ENCODE measurements at regions of chr18 and their contacts with region 1.

Region 1: GRCh38 chr18:5868218-5869115 is 26.9 kb downstream of the TMEM200C start:
- DNase-seq: peak; percentile 84
- H3K4me3 ChIP-seq: no peak overlapping the region
- H3K27ac ChIP-seq: no peak overlapping the region
- H3K4me1 ChIP-seq: no peaks in the 10 kb centered on the region
- H3K27me3 ChIP-seq: no peaks in the 10 kb centered on the region
- CTCF ChIP-seq: peak; percentile 73 to 77
- POLR2A ChIP-seq: no peak

Region 2: DNA sequence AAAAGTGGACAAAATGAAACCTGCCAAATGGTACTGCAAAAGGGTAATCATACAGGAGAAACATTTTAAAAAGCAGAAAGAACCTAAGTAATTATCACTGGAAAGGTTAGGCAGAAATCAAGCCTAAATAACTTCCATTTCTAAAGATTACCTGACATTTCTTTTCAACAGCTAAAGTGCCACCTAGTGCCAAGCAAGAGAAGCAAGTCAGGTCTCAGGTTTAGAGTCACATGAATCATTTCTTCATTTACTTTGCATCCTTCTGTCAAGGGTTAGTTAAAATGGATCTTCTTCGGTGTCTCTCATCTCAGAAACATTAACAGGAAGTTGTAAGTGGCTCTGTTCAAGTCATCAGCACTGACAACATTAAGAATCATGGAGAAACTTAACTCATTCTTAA is 761.7 kb before region 1 on chr18:
- CTCF ChIA-PET with region 1: no interaction called
- POLR2A ChIA-PET with region 1: no interaction called
- dilution Hi-C with region 1: no loop called
- intact Hi-C with region 1: no loop called
- DNase-seq: no peak
- H3K4me3 ChIP-seq: no peak overlapping the region
- H3K27ac ChIP-seq: no peak overlapping the region
- H3K4me1 ChIP-seq: no peaks in the 10 kb centered on the region
- H3K27me3 ChIP-seq: no peaks in the 10 kb centered on the region
- CTCF ChIP-seq: no peak
- POLR2A ChIP-seq: no peak

Region 3: GRCh38 chr18:5600378-5601071 is 267.9 kb before region 1 on chr18:
- CTCF ChIA-PET with region 1: interaction called, 11 read pairs
- POLR2A ChIA-PET with region 1: no interaction called
- dilution Hi-C with region 1: no loop called
- intact Hi-C with region 1: no loop called
- DNase-seq: peak; percentile 57
- H3K4me3 ChIP-seq: no peak overlapping the region
- H3K27ac ChIP-seq: no peak overlapping the region
- H3K4me1 ChIP-seq: no peaks in the 10 kb centered on the region
- H3K27me3 ChIP-seq: peaks cover 0 to 11% of the 10 kb centered on the region in 2 experiments
- CTCF ChIP-seq: peak; percentile 8 to 18
- POLR2A ChIP-seq: no peak

Region 4: GRCh38 chr18:5857180-5857579 is 11.3 kb before region 1 on chr18:
- CTCF ChIA-PET with region 1: interaction called, 13 read pairs
- POLR2A ChIA-PET with region 1: no interaction called
- dilution Hi-C with region 1: no loop called
- intact Hi-C with region 1: no loop called
- DNase-seq: no peak
- H3K4me3 ChIP-seq: no peak overlapping the region
- H3K27ac ChIP-seq: no peak overlapping the region
- H3K4me1 ChIP-seq: no peaks in the 10 kb centered on the region
- H3K27me3 ChIP-seq: no peaks in the 10 kb centered on the region
- CTCF ChIP-seq: no peak
- POLR2A ChIP-seq: no peak

Region 5: DNA sequence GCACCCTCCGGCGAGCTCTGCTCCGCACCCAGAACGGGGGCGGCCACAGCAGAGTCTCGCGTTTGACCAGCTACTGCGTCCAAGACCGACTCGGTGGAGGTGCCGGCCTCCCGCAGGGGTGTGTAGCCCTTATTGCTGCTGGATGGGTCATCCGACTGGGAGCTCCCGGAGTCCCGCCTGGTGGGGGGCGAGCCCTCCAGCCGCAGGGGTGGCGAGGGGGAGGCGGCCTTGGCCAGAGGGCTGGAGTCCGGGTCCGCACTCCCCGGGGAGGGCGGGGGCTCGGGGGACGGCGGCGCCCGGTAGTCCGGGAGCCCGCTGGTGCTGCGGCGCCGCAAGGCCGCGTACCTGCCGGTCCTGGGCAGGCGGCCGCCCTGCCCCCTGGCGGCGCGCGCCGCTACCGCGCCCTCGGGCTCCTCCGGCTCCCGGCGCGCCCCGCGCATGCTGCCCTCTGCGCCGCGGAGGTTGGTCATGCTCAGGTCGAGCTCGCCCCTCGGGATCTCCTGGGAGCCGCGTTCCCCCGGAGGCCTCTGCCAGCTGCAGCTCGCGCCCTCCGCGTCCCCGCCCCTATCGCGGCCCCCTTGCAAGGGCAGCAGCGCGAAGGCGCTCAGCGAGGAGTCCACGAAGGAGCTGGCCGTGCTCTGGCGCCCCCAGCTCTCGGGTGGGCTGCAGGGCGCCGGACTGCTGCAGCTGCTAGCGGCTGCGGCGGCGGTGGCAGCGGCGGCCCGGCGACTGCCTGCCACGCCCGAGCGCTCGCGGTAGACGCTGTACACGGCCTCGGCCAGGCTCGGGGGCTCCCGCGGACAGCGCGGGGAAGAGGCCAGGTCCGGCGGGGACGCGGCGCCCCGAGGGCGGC is 22.1 kb after region 1 on chr18:
- CTCF ChIA-PET with region 1: interaction called, 16 read pairs
- POLR2A ChIA-PET with region 1: no interaction called
- dilution Hi-C with region 1: no loop called
- intact Hi-C with region 1: loop called (anchors 1 kb)
- DNase-seq: peak; percentile 15
- H3K4me3 ChIP-seq: peak overlapping the region in 2 of 3 experiments; percentile 32 to 34
- H3K27ac ChIP-seq: no peak overlapping the region
- H3K4me1 ChIP-seq: peaks cover 3% of the 10 kb centered on the region
- H3K27me3 ChIP-seq: peaks cover 37 to 54% of the 10 kb centered on the region in 2 experiments
- CTCF ChIP-seq: peak; percentile 33 to 58
- POLR2A ChIP-seq: no peak

Region 6: GRCh38 chr18:6219116-6219717 is 350.8 kb after region 1 on chr18:
- CTCF ChIA-PET with region 1: interaction called, 16 read pairs
- POLR2A ChIA-PET with region 1: no interaction called
- dilution Hi-C with region 1: no loop called
- intact Hi-C with region 1: loop called (anchors 1 kb)
- DNase-seq: peak; percentile 52
- H3K4me3 ChIP-seq: no peak overlapping the region
- H3K27ac ChIP-seq: no peak overlapping the region
- H3K4me1 ChIP-seq: no peaks in the 10 kb centered on the region
- H3K27me3 ChIP-seq: no peaks in the 10 kb centered on the region
- CTCF ChIP-seq: peak; percentile 80 to 88
- POLR2A ChIP-seq: no peak

Region 7: DNA sequence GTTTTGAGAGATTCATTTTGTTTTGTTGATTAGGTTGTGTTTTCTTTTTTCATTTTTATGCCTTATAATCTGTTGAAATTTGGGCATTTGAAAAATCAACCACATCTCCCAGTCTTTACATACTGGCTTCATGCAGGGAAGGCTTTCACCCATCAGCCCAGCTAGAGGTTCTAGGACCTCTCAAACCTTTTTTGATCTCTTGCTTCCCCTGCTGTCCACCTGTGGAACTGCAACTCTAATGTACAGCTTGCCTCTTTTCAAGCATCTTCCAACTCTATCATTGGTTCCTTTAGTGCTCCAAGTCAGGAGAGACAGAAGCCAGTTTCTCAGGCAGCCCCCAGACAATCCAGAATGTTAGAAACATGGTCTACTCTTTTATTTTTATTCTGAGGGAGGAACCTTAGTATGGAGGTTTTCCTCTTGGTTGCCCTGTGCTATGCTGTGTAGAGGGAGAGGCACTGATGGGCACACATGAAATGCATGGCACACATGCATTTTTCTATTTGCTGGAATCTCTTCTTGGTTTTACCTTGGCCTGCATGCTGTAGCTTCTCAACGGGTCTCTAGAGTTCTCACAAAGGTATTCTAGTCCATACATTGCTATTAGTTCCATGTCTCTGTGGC is 653.4 kb after region 1 on chr18:
- CTCF ChIA-PET with region 1: interaction called, 65 read pairs
- POLR2A ChIA-PET with region 1: no interaction called
- dilution Hi-C with region 1: no loop called
- intact Hi-C with region 1: loop called (anchors 1 kb)
- DNase-seq: peak; percentile 52
- H3K4me3 ChIP-seq: no peak overlapping the region
- H3K27ac ChIP-seq: no peak overlapping the region
- H3K4me1 ChIP-seq: no peaks in the 10 kb centered on the region
- H3K27me3 ChIP-seq: no peaks in the 10 kb centered on the region
- CTCF ChIP-seq: peak; percentile 68 to 79
- POLR2A ChIP-seq: no peak

Region 8: DNA sequence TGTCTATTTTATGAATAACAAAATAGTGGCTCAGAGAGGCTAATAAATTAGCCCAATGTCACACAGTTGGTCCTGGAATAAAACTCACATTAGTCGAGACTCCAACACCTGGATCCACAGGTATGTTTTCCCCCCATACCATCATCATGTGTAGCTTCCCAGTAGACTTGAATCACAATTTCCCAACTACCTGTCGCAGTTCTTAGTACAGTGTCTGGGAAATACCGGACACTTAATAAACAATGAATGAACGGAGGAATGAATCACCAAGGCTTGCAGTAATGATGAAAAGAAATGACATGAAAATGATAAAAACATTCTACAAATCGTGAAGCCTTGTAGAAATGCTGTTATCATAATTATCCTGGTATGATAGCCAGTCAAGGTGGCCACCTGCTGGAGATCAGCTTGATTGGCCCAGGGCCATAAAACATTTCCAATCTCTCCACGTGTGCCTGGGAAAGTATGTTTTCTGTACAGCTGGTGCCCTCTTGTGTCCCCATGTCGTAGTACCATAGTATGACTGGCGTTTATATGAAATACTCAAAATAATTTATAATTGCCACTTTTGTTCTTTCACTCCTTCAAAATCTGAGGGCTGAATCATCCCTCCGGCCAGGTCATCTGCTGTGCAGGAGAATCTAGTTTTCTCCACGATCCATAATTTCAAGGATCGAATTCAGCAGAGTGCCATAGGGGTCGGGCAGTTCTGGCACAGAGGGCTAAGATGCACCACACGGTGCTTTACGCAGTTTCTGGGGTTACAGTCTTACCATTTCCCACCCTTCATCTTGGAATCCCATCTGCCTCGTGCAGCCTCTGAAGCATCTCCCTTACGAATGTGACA is 1153.8 kb after region 1 on chr18:
- CTCF ChIA-PET with region 1: interaction called, 4 read pairs
- POLR2A ChIA-PET with region 1: no interaction called
- dilution Hi-C with region 1: no loop called
- intact Hi-C with region 1: loop called (anchors 1 kb)
- DNase-seq: peak; percentile 47
- H3K4me3 ChIP-seq: no peak overlapping the region
- H3K27ac ChIP-seq: no peak overlapping the region
- H3K4me1 ChIP-seq: no peaks in the 10 kb centered on the region
- H3K27me3 ChIP-seq: no peaks in the 10 kb centered on the region
- CTCF ChIP-seq: peak; percentile 26 to 31
- POLR2A ChIP-seq: no peak

Measured in endothelial cell of umbilical vein (primary cell).